Posterior vena cava (tissue), 2 donors: ENCODE measurements at regions of chr3 and their contacts with region 1.

Region 1: GRCh38 chr3:24069045-24069444 is 124.0 kb downstream of the NR1D2 start:
- DNase-seq: no peak

Region 2: DNA sequence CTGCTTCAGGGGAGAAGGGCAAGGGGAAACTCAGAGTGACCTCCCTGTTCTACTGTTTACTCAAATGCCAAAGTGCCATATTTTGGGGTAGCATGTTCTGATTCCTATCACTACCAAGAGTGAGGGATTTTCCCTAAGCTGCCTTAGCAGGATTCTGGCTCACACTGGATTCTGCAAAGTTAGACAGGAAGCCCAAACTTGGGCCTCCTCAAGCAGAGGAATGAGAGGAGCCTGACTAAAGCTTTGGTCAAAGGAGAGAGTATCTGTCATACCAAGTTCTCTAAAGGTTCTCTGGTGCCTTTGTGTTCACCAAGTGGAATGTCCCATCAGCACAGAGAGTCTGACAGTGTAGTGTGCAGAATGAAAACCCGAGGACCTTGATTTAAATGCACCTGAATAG is 1350.2 kb after region 1 on chr3:
- intact Hi-C with region 1: loop called in 1 of 2 experiments (anchors 5 kb)
- DNase-seq: no peak